ENCODE measurements at regions of chr6 and their contacts with region 1.

Region 1: GRCh38 chr6:69835414-69836179 is 30.8 kb upstream of the COL19A1 start:
- DNase-seq: no peak
- ATAC-seq: no peak

Region 2: GRCh38 chr6:69985180-69985579 is 149.6 kb after region 1 on chr6:
- intact Hi-C with region 1: loop called (anchors 10 kb)
- DNase-seq: no peak
- ATAC-seq: no peak

Region 3: DNA sequence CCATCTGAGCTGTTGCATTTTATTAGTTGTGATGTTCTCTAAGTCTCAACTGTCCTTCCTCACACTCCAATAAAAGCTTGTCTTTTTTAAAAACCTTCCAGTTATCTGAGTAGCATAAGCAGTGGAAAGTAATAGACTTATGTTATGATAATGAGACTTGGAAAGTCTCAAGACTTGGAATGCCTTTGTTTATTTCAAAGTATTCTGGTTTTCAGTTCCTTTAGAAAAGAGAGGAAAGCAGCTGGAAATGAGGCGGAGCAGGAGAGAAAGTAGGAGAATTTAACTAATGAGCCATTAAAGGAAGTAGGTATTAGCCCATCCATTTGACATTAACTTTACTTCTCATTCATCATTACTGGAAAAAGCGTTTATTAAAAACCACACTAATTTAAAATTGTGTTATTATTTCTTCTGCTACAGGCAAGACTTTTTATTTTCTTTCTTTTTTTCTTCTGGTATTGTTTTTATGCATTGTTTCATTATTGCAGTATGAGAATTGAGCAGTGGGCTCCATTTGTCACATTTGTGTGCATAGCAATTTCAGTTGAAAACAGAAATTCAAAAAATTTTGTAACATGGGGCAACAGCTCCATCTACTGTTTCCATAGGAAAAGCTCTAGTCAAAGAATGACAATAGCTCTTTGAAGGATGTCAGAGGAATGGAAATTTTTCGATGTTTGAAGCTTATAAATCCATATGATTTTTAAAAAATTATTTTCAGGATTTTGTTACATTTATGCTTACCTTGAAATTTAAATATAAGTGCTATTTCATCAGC is 272.4 kb after region 1 on chr6:
- intact Hi-C with region 1: loop called (anchors 5 kb)
- DNase-seq: no peak
- ATAC-seq: no peak